GM10248 (cell line): ENCODE measurements at regions of chr14 and their contacts with region 1.

Region 1: DNA sequence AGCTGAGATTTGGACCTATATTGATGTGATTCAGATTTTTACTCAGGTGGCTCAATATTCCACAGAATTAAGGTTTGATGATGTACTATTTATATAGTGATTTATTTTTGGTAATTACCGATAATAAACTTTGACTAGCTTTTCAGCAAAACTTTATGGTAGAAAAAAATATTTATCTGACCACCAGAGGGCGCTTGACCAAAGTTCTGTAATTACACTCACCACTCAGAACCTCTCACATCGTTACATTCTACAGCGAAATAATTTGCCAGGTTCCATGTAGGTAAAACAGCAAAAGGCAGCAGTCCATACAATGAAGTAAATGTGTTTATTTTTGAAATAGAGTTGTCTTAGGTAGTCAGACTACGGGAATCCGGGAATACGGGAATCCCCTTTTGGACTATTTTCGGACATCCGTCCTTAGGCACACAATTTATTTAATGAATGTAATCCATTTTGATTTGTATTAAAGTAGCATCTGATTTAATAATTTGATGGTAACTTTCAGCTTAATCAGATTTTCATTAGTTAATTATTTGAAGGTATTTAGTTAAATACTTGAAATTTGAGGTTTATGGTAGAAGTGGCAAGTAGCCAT is 143.0 kb upstream of the DDHD1 start:
- DNase-seq: peak; percentile 26
- CTCF ChIP-seq: peak; percentile 40

Region 2: DNA sequence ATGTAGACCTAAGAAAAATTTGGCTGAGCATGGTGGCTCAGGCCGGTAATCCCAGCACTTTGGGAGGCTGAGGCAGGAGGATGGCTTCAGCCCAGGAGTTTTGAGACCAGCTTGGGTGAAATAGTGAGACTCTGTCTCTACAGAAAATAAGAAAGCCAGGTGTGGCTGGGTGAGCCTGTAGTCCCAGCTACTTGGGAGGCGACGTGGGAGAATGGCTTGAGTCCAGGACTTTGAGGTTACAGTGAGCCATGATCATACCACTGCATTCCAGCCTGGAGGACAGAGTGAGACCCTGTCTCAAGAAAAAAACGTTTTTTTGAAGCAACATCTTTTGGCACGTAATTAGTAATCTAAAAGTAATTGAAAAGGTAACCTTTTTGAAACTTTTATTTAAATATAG is 416.1 kb before region 1 on chr14:
- CTCF ChIA-PET with region 1: no interaction called
- POLR2A ChIA-PET with region 1: no interaction called
- DNase-seq: no peak
- CTCF ChIP-seq: no peak

Region 3: DNA sequence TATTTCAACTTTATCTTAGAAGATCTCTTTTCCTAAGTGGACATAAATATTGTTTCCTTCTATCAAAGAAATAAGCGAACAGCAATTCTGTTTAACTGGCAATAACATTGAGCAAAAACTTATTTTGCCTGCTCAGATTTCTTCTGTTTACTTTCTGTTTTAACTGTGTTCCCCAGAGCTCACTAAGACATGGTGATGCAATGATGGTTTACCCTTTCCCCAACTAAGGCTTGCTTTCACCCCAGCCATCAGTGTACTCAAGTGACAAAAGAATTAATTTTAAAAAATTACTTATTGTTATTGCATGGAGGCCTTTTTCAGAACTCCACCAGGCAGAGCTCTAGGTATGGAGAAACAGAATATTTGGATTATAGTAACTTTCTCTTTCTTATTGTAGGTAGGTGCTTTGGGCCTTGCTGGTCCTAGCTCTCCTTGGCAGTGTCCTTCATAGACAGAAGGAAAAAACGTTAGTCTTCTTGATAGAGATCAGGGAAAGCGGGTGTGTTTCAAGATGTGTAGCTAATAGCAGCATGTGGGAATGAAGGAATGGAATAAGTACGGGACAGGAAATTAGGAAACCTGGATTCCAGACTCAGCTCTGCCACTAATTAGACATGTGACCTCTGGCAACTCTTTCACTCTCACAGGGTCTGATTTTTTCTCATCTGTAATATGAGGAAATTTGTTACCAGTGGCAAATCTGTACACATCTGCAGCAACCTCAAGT is 128.3 kb before region 1 on chr14:
- CTCF ChIA-PET with region 1: no interaction called
- POLR2A ChIA-PET with region 1: no interaction called
- DNase-seq: no peak
- CTCF ChIP-seq: no peak

Region 4: GRCh38 chr14:53278930-53279506 is 17.1 kb before region 1 on chr14:
- CTCF ChIA-PET with region 1: interaction called, 25 read pairs
- POLR2A ChIA-PET with region 1: no interaction called
- DNase-seq: no peak
- CTCF ChIP-seq: no peak

Region 5: DNA sequence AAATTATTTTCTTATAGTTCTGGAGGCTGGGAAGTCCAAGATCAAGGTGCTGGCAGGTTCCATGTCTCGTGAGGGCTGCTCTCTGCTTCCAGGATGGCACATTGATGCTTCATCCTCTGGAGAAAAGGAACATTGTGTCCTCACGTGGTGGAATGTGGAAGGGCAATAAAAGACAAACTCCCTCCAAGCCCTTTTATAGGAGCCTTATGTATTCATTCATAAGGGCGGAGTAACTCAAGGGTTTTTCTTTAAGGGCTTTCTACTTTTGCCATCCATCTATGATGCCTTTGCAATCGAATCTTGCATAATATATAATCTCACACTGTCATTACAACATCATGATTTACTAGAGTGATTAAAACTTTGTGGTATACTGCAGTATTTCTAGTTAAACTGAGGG is 10.3 kb before region 1 on chr14:
- CTCF ChIA-PET with region 1: interaction called, 25 read pairs
- POLR2A ChIA-PET with region 1: no interaction called
- DNase-seq: no peak
- CTCF ChIP-seq: no peak

Region 6: GRCh38 chr14:53306267-53306721 is 10.2 kb after region 1 on chr14:
- CTCF ChIA-PET with region 1: interaction called, 39 read pairs
- POLR2A ChIA-PET with region 1: interaction called, 3 read pairs
- DNase-seq: peak; percentile 38
- CTCF ChIP-seq: peak; percentile 55

Region 7: GRCh38 chr14:53325176-53325806 is 29.2 kb after region 1 on chr14:
- CTCF ChIA-PET with region 1: interaction called, 25 read pairs
- POLR2A ChIA-PET with region 1: no interaction called
- DNase-seq: no peak
- CTCF ChIP-seq: peak; percentile 47

Region 8: GRCh38 chr14:53432378-53432802 is 136.3 kb after region 1 on chr14:
- CTCF ChIA-PET with region 1: no interaction called
- POLR2A ChIA-PET with region 1: no interaction called
- DNase-seq: peak; percentile 60
- CTCF ChIP-seq: peak; percentile 63